ENCODE measurements at regions of chr9 and their contacts with region 1.

Region 1: DNA sequence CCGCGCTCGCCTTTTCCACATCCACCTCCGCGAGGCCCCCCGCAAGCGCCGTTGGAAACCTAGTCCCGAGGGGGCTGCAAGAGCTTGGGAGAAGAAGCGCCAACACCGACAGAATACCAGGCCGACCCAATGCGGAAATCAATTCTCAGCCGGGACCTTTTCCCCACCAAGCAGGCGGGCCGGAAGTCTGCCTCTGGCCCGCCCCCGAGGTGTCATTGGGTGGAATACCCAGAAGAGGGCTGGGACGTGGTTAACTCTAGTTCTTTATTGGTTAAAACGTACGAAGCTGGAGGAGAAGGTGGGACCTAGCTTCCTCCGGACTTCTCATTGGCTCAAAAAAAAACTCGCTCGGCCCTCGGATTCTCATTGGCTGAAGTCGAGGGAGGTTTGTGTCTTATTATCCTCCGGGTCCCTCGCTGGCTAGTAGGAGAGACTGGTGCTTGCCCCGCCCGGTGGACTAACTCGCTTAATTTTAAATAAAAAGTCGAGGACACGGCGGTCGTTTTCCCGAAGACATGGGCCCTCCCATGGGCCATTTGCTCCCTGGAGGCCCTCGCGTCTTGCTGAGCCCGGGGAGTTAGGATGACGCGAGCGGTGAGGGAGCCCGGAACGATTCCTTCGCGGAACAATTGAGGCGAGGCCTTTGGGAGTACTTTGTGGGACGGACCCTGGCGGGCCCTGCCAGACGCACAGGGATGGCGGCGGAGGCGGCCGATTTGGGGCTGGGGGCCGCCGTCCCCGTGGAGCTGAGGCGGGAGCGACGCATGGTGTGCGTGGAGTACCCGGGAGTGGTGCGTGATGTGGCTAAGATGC is at the start of gene GTF3C5:
- DNase-seq: peak in 1 of 2 donors; percentile 99
- H3K4me3 ChIP-seq: peak within 1 kb of the TSS; percentile 69 to 84
- H3K27ac ChIP-seq: peak within 1 kb of the TSS; percentile 88
- H3K4me1 ChIP-seq: peaks cover 30% of the 10 kb centered on the region
- H3K27me3 ChIP-seq: no peaks in the 10 kb centered on the region
- CTCF ChIP-seq: peak in 2 of 3 experiments; percentile 3 to 34
- POLR2A ChIP-seq: peak in 1 of 2 donors; percentile 71
- total RNA-seq, gene GTF3C5: 53.8 TPM

Region 2: DNA sequence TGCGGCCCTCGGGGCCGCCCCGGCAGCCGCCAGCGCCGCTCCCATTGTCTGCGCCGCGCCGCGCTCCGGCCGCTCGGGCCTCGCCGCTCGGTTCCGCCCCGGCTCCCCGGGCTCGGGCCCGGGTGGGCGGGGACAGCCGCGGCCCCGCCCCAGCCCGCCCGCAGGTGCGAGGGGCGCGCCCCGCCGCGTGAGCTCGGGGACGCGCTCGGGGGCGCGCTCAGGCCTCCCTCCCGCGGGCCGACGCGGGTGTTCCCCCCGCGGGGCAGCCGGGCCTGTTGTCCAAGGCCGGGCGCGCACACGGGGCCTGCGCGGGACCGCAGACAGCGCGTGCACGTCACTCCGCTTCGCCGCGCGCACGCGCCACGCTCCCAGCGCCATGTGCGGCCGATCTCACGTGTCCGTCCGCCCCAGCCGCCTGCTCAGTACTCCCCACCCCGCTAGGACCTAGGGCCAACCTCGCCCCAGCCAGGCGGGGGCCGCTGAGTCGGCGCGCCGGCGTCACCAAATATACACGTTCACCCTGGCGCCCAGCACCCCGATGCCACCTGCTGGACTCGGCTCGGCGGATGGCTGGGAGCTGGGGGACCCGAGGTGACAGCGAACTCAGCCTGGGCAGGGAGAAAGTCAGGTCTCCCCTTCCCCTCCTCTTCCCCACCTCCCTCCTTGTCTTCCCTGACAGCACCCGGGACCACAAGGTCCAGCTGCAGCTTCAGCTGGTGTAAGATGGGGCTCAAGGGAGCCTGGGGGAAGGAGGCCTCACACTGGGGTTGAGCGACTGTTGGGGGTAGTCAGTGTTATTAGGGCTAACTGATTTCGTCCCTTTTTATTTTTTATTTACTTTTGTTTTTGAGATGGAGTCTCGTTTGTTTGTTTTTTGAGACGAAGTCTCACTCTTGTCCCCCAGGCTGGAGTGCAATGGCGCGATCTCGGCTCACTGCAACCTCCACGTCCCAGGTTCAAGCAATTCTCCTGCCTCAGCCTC is 118.9 kb after region 1 on chr9:
- intact Hi-C with region 1: loop called (anchors 10 kb)
- DNase-seq: no peak
- H3K4me3 ChIP-seq: peak overlapping the region; percentile 74 to 80
- H3K27ac ChIP-seq: peak overlapping the region; percentile 93
- H3K4me1 ChIP-seq: peaks cover 43% of the 10 kb centered on the region
- H3K27me3 ChIP-seq: no peaks in the 10 kb centered on the region
- CTCF ChIP-seq: peak in 1 of 3 experiments; percentile 15
- POLR2A ChIP-seq: peak in 1 of 2 donors; percentile 5